PC-9 (cell line): ENCODE measurements at regions of chr3 and their contacts with region 1.

Region 1: DNA sequence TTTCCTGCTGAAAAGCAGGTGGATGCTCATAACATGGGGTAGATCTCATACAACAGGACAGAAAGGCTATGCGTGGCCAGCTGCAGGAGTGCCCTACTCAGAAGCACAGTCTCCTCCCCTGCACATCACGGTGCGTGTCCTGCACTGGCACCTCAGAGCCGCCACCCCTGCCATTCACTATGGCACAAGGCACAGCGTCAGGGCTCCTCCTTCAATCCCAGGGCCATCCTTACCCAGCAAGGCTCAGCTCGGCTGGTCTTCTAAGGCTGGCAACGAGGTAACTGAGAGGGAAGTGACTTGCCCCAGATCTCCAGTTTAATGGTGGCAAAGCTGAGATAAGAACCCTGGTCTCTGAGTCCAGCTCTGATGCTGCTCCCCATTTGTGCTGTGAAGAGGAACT is 97.1 kb downstream of the CPN2 start:
- DNase-seq: no peak
- H3K4me3 ChIP-seq: no peak overlapping the region
- H3K27ac ChIP-seq: no peak overlapping the region
- H3K4me1 ChIP-seq: no peaks in the 10 kb centered on the region
- H3K27me3 ChIP-seq: no peaks in the 10 kb centered on the region
- CTCF ChIP-seq: no peak

Region 2: GRCh38 chr3:193894121-193894863 is 359.7 kb before region 1 on chr3:
- CTCF ChIA-PET with region 1: no interaction called
- POLR2A ChIA-PET with region 1: no interaction called
- intact Hi-C with region 1: no loop called
- DNase-seq: peak in 1 of 2 experiments; percentile 48
- H3K4me3 ChIP-seq: no peak overlapping the region
- H3K27ac ChIP-seq: no peak overlapping the region
- H3K4me1 ChIP-seq: no peaks in the 10 kb centered on the region
- H3K27me3 ChIP-seq: no peaks in the 10 kb centered on the region
- CTCF ChIP-seq: no peak

Region 3: DNA sequence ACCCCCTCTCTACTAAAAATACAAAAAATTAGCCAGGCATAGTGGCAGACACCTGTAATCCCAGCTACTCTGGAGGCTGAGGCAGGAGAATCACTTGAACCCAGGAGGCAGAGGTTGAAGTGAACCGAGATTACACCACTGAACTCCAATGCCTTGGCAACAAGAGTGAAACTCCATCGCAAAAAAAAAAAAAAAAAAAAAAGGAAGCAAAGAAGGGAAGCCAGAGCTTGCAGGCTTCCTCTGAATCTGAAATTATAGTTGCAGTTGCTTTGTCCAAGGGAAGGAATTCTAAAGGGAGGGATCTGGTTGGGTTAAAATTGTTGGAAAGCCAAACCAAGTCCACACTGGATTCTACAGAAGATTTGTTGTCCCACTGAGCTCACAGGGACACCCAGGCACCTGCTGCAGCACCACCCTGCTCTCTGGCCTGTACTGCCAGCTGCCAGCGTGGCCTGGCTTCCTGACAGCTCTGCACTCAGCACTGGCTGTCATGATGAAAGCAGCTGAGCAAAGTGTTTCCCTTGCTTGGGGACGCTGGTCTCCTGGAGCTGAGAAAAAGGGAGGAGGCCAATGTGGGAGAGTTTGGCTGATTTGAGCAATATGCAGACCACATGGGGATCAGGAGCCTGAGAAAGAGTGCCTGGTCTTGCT is 206.9 kb before region 1 on chr3:
- CTCF ChIA-PET with region 1: interaction called, 10 read pairs
- POLR2A ChIA-PET with region 1: no interaction called
- intact Hi-C with region 1: no loop called
- DNase-seq: no peak
- H3K4me3 ChIP-seq: no peak overlapping the region
- H3K27ac ChIP-seq: no peak overlapping the region
- H3K4me1 ChIP-seq: peaks cover 7% of the 10 kb centered on the region; the same call in 1 of the 2 replicates
- H3K27me3 ChIP-seq: no peaks in the 10 kb centered on the region
- CTCF ChIP-seq: no peak